Testis (tissue), 5 donors: ENCODE measurements at regions of chr3 and their contacts with region 1.

Region 1: DNA sequence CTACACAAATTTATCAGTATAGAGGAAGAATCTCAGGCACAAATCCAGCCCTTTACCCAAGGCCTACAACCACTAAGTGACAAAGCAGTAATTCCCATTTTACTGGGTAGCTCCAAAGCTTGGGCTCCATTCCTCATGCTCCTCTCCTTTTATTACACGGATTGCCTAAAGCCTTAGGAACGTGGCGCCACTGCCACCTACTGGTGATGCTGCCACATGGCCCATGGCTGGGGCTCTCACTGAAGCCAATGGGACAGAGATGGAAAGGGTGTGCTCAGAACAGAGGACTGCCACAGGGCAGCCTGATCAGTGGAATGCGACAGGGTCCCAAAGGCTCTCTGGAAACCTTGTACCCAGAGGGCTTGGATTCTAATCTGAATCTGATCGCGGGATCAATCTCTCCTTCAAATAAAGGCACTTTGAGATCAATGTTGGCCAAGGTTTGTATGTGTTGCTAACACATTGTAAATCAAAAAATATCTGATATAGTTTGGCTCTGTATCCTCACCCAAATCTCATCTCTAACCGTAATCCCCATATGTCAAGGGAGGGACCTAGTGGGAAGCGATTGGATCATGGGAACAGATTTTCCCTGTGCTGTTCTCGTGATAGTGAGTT is 33.5 kb upstream of the LYZL4 start:
- DNase-seq: peak; percentile 88
- H3K4me3 ChIP-seq: no peak overlapping the region
- H3K27ac ChIP-seq: no peak overlapping the region
- H3K4me1 ChIP-seq: no peaks in the 10 kb centered on the region
- H3K27me3 ChIP-seq: no peaks in the 10 kb centered on the region
- CTCF ChIP-seq: peak; percentile 72 to 87 (median 84)
- POLR2A ChIP-seq: no peak

Region 2: DNA sequence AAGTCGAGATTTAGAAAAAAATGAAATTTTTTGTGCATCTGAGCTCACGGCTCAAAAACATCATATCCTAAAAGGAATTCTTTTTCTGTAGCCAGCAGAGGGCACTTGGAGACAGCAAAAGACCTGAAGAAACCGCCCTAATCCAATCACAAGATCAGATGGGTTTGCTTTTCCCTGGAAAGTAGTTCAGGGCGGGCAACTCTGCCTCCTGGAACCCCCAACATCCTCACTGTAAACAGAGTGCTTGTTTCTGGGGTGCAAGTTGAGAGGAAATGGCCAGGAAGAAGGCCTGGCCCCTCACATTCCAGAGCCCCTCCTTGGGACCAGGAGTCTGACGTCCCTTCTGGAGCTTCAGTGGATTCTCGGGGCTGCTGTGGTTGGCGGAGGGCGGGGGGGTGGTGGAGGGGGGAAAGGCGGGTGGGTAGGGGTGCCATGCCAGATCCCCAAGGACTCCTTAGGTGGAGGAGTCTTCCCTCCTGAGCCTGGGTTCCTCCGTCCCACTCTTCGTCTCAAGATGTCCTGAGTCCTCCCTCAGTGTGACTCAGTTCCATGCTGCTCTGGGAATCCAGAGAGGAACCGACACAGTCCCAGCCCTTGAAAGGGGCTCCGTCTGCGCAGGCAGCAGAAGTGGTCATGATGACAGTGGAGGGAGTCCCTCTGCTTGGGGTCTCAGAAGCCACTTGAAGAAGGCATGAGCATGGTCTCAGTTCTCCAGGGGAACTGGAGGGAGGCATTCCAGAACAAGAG is 213.8 kb before region 1 on chr3:
- intact Hi-C with region 1: loop called (anchors 10 kb)
- DNase-seq: no peak
- H3K4me3 ChIP-seq: no peak overlapping the region
- H3K27ac ChIP-seq: no peak overlapping the region
- H3K4me1 ChIP-seq: peaks cover 7% of the 10 kb centered on the region
- H3K27me3 ChIP-seq: no peaks in the 10 kb centered on the region
- CTCF ChIP-seq: peak; percentile 40 to 53 (median 44)
- POLR2A ChIP-seq: no peak

Region 3: GRCh38 chr3:42289026-42289425 is 154.9 kb before region 1 on chr3:
- intact Hi-C with region 1: no loop called
- DNase-seq: no peak
- H3K4me3 ChIP-seq: no peak overlapping the region
- H3K27ac ChIP-seq: no peak overlapping the region
- H3K4me1 ChIP-seq: no peaks in the 10 kb centered on the region
- H3K27me3 ChIP-seq: no peaks in the 10 kb centered on the region
- CTCF ChIP-seq: no peak
- POLR2A ChIP-seq: no peak

Region 4: GRCh38 chr3:42600111-42600988 is 156.4 kb after region 1 on chr3 and contains the start of gene NKTR:
- intact Hi-C with region 1: no loop called
- DNase-seq: peak; percentile 98
- H3K4me3 ChIP-seq: peak within 1 kb of the TSS; percentile 63 to 97
- H3K27ac ChIP-seq: peak within 1 kb of the TSS; percentile 91 to 99
- H3K4me1 ChIP-seq: peaks cover 11% of the 10 kb centered on the region
- H3K27me3 ChIP-seq: no peaks in the 10 kb centered on the region
- CTCF ChIP-seq: peak in 1 of 3 experiments; percentile 23
- POLR2A ChIP-seq: peak; percentile 59
- total RNA-seq, gene NKTR: 175 to 203 TPM